HepG2 (cell line): ENCODE measurements at regions of chr2 and their contacts with region 1.

Region 1: GRCh38 chr2:68709421-68709911 is 25.1 kb upstream of the ARHGAP25 start:
- DNase-seq: peak; percentile 57
- ATAC-seq: peak; percentile 96
- H3K4me3 ChIP-seq: no peak overlapping the region
- H3K27ac ChIP-seq: no peak overlapping the region
- H3K4me1 ChIP-seq: no peaks in the 10 kb centered on the region
- H3K27me3 ChIP-seq: no peaks in the 10 kb centered on the region; a peak in 1 of 5 replicates
- CTCF ChIP-seq: peak; percentile 77
- EP300 ChIP-seq: no peak
- POLR2A ChIP-seq: no peak
- RAD21 ChIP-seq: no peak

Region 2: DNA sequence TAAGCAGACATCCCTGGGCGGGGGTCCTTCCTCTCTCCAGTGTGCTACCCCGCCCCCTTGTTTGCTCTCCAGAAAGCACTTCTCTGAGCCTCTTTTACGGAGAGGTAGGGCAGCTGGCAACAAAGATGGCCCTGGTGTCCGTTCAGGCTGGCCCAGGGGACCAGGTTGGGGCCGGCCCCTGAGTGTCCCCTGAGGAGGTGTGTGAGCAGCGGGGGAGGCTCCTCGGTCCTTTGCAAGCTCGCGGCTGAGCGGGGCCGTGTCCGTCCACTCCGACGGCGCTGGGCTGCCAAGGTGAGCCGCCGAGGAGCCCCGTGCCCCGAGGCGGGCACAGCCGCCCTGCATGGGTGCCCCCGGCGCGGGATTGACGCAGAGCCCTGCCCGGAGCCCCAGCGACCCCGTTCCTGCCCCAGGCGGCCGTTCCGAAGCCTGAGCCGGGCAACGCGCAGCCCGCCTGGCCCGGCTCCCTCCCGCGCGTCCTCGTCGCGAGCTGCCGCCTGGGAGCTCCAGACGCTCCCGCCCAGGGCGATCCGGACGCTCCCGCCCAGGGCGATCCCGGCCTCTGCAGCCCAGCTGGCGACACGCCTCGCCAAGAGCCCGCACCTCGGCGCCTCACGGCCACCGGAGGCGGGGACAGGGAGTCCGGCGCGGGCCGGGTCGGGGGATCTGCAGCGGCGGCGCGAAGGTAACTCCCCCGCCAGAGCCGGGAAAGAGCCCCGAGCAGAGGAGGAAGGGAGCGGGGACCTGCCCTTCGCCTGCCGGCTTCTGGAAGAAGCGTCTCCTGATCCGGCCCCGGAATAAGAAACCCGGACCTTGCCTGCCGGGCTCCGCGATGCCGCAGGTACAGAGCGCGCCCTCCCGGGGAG is 66.2 kb before region 1 on chr2 and contains the start of gene PROKR1:
- CTCF ChIA-PET with region 1: no interaction called
- POLR2A ChIA-PET with region 1: no interaction called
- in situ Hi-C with region 1: no loop called
- intact Hi-C with region 1: no loop called
- DNase-seq: no peak
- ATAC-seq: peak; percentile 92
- H3K4me3 ChIP-seq: peak within 1 kb of the TSS in 2 of 3 experiments; percentile 20 to 58; a peak in 3 of 6 replicates
- H3K27ac ChIP-seq: no peak within 1 kb of the TSS
- H3K4me1 ChIP-seq: no peaks in the 10 kb centered on the region; the same call in 1 of the 2 replicates
- H3K27me3 ChIP-seq: peaks cover 11 to 59% of the 10 kb centered on the region in 2 experiments; a peak in 4 of 5 replicates
- CTCF ChIP-seq: 0 out of 2 replicates have a peak, but pooled peaks have one; percentile 18
- EP300 ChIP-seq: no peak
- POLR2A ChIP-seq: no peak
- RAD21 ChIP-seq: no peak
- total RNA-seq, gene PROKR1: not detected in 2 replicates

Region 3: DNA sequence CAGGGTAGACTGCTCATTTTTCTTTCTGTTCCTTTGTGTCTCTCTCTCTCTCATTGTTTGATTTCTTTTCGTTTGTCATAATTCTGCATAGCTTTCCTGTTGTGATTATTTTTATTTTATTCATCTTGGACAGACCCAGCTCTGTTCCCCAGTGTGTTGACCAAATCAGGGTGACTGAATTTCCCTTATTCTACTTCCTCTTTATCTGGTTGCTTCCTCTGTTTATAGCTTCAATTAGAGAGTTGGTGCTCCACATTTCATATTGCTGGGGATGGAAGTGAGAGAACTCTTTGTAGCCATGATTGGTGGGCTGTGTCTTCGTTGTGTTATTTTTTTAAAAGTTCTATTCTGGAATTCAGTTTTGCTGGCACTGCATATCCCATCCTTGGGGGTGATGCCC is 47.0 kb before region 1 on chr2:
- CTCF ChIA-PET with region 1: no interaction called
- POLR2A ChIA-PET with region 1: no interaction called
- in situ Hi-C with region 1: no loop called
- intact Hi-C with region 1: no loop called
- DNase-seq: no peak
- ATAC-seq: no peak
- H3K4me3 ChIP-seq: no peak overlapping the region
- H3K27ac ChIP-seq: no peak overlapping the region
- H3K4me1 ChIP-seq: no peaks in the 10 kb centered on the region
- H3K27me3 ChIP-seq: peaks cover 0 to 17% of the 10 kb centered on the region in 2 experiments; a peak in 1 of 5 replicates
- CTCF ChIP-seq: no peak
- EP300 ChIP-seq: no peak
- POLR2A ChIP-seq: no peak
- RAD21 ChIP-seq: no peak

Region 4: GRCh38 chr2:68726608-68727367 is 17.3 kb after region 1 on chr2:
- CTCF ChIA-PET with region 1: no interaction called
- POLR2A ChIA-PET with region 1: no interaction called
- in situ Hi-C with region 1: no loop called
- intact Hi-C with region 1: no loop called
- DNase-seq: no peak
- ATAC-seq: no peak
- H3K4me3 ChIP-seq: no peak overlapping the region
- H3K27ac ChIP-seq: no peak overlapping the region
- H3K4me1 ChIP-seq: no peaks in the 10 kb centered on the region
- H3K27me3 ChIP-seq: peaks cover 0 to 19% of the 10 kb centered on the region in 2 experiments; a peak in 3 of 5 replicates
- CTCF ChIP-seq: no peak
- EP300 ChIP-seq: no peak
- POLR2A ChIP-seq: no peak
- RAD21 ChIP-seq: no peak

Region 5: DNA sequence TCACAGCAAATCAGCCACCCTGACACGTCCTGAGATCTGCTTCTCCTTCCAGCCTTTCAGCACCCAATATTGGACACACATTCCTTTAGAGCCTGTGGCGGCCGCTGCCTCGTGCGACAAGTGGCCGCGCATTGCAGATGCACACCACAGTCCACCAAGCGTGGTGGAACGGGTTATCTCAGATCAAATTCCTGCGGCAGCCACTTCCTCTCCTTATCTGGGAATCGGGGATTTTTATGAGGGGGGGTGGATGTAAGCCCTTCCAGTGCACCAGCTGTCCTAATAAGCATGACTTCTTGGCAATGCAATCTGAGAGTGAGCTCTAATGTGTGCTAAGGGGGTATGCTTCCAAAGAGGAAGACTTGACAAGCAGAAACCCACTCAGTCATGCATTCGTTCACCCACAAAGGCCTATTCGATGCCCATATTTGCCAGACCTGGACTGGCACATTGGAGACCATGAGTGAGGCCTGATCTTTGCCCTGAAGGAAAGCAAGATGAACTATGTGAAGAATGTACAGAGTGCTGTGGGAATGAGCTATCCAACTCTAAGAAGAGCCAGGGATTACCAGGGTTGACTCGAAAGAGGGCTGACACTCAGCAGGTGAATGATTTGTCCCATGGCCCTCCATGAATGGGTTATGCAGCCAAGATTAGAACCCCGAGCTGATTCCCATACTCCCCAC is 180.2 kb after region 1 on chr2:
- CTCF ChIA-PET with region 1: no interaction called
- POLR2A ChIA-PET with region 1: no interaction called
- in situ Hi-C with region 1: no loop called
- intact Hi-C with region 1: no loop called
- DNase-seq: no peak
- ATAC-seq: peak; percentile 45; the same call in 2 of the 3 replicates
- H3K4me3 ChIP-seq: no peak overlapping the region
- H3K27ac ChIP-seq: no peak overlapping the region
- H3K4me1 ChIP-seq: peaks cover 28% of the 10 kb centered on the region
- H3K27me3 ChIP-seq: peaks cover 0 to 3% of the 10 kb centered on the region in 2 experiments; a peak in 1 of 5 replicates
- CTCF ChIP-seq: no peak
- EP300 ChIP-seq: no peak
- POLR2A ChIP-seq: no peak
- RAD21 ChIP-seq: no peak

Region 6: GRCh38 chr2:68925295-68925896 is 215.9 kb after region 1 on chr2:
- CTCF ChIA-PET with region 1: interaction called, 4 read pairs
- POLR2A ChIA-PET with region 1: no interaction called
- in situ Hi-C with region 1: loop called (anchors 5 kb)
- intact Hi-C with region 1: loop called (anchors 1 kb)
- DNase-seq: peak; percentile 55
- ATAC-seq: peak; percentile 89
- H3K4me3 ChIP-seq: no peak overlapping the region
- H3K27ac ChIP-seq: no peak overlapping the region
- H3K4me1 ChIP-seq: peaks cover 8% of the 10 kb centered on the region; the same call in 1 of the 2 replicates
- H3K27me3 ChIP-seq: peaks cover 0 to 35% of the 10 kb centered on the region in 2 experiments; a peak in 4 of 5 replicates
- CTCF ChIP-seq: peak; percentile 85
- EP300 ChIP-seq: no peak
- POLR2A ChIP-seq: no peak
- RAD21 ChIP-seq: peak; percentile 76